ENCODE measurements at regions of chr6 and their contacts with region 1.

Region 1: DNA sequence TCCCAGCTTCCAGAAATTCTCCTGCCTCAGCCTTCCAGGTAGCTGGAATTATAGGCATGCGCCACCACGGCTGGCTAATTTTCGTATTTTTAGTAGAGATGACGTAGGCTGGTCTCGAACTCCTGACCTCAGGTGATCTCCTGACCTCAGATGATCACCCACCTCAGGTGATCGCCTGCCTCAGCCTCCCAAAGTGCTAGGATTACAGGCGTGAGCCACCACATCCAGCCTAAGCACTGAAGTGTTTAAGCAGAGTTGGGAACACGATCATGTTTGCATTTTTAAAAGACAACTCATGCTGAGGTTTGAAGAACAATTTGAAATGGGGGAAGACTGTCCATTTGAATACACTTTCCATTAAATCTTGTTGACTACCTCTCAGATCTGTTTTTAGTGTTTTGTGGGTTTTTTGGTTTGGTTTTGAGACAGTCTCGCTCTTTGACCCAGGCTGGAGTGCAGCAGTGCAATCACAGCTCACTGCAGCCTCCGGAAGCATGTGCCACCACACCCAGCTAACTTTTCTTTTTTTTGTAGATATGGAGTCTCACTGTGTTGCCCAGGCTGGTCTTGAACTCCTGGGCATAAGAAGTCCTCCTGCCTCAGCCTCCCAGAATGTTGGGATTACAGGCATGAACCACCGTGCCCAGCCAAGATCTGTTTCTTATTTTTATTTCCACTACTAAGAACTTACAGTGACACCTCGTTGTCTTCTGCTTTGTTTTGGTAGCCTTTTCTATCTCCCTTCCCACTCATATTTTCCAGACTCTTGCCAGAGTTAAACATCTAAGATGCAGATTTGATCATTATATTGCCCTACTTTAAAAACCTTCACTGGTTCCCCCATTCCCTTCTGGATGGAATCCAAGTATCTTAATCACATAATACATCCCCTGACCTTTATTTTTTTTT is 5.5 kb downstream of the CASP8AP2 start:
- DNase-seq: peak; percentile 87
- ATAC-seq: peak; percentile 95
- H3K4me3 ChIP-seq: peak overlapping the region; percentile 42
- H3K27ac ChIP-seq: peak overlapping the region; percentile 68
- H3K4me1 ChIP-seq: peaks cover 28% of the 10 kb centered on the region
- H3K27me3 ChIP-seq: no peaks in the 10 kb centered on the region
- CTCF ChIP-seq: no peak
- EP300 ChIP-seq: peak; percentile 32 to 66; a peak in 3 of 4 replicates
- POLR2A ChIP-seq: no peak
- RAD21 ChIP-seq: no peak

Region 2: DNA sequence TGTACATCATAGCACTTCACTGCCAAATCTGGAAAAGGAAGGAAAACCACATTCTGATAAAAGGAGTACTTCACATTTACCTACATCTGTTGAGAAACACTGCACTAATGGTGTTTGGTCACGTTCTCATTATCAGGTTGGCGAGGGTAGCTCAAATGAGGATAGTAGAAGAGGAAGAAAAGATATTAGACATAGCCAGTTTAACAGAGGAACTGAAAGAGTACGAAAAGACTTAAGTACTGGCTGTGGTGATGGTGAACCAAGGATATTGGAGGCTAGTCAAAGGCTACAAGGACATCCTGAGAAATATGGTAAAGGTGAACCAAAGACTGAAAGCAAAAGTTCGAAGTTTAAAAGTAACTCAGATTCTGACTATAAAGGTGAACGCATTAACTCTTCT is 27.1 kb after region 1 on chr6:
- CTCF ChIA-PET with region 1: interaction called, 5 read pairs
- POLR2A ChIA-PET with region 1: interaction called, 6 read pairs
- RAD21 ChIA-PET with region 1: interaction called, 3 read pairs
- SMC1A ChIA-PET with region 1: interaction called, 6 read pairs
- in situ Hi-C with region 1: no loop called
- intact Hi-C with region 1: loop called (anchors 2 kb)
- DNase-seq: peak; percentile 86
- ATAC-seq: peak; percentile 91
- H3K4me3 ChIP-seq: peak overlapping the region; percentile 18; the same call in 1 of the 2 replicates
- H3K27ac ChIP-seq: peak overlapping the region; percentile 42
- H3K4me1 ChIP-seq: peaks cover 25% of the 10 kb centered on the region
- H3K27me3 ChIP-seq: no peaks in the 10 kb centered on the region
- CTCF ChIP-seq: no peak
- EP300 ChIP-seq: no peak
- POLR2A ChIP-seq: no peak
- RAD21 ChIP-seq: no peak

Region 3: DNA sequence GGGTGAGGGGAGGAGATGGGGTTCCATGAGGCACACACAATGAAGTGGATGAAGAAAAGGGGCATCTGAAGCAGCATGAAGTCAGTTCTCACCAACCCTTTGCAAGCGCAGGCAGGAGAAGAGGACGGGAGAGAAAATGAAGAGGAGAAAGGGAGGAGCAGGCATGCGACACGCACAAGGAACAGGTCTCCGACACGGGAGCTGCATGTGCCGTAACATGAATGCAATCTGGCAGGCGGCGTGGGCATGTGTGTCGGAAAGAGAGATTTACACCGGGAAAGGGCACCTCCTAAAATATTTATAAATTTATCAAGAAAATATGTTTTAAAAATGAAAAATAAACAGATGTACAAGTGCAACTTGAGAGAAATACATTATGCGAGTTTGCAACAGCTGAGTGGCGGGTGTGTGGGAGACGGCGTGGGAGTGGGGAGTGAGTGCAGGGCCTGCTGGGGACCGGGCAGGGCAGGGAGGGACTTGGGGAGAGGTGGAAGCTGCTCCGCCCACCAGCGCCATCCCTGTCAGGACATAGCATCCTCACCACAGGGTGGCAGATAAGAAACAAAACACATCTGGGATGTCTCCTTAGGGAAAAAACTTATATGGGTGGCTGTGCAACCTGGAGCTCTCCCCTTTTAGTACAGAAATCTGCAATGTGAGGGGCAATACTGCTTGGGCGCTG is 99.7 kb after region 1 on chr6:
- CTCF ChIA-PET with region 1: no interaction called
- POLR2A ChIA-PET with region 1: no interaction called
- RAD21 ChIA-PET with region 1: no interaction called
- SMC1A ChIA-PET with region 1: no interaction called
- in situ Hi-C with region 1: no loop called
- intact Hi-C with region 1: no loop called
- DNase-seq: no peak
- ATAC-seq: no peak
- H3K4me3 ChIP-seq: no peak overlapping the region
- H3K27ac ChIP-seq: no peak overlapping the region
- H3K4me1 ChIP-seq: no peaks in the 10 kb centered on the region
- H3K27me3 ChIP-seq: peaks cover 0 to 2% of the 10 kb centered on the region in 2 experiments; a peak in 3 of 4 replicates
- CTCF ChIP-seq: no peak
- EP300 ChIP-seq: no peak
- POLR2A ChIP-seq: no peak
- RAD21 ChIP-seq: no peak

Measured in GM12878 (cell line).